WTC11 (cell line): ENCODE measurements at regions of chr12 and their contacts with region 1.

Region 1: DNA sequence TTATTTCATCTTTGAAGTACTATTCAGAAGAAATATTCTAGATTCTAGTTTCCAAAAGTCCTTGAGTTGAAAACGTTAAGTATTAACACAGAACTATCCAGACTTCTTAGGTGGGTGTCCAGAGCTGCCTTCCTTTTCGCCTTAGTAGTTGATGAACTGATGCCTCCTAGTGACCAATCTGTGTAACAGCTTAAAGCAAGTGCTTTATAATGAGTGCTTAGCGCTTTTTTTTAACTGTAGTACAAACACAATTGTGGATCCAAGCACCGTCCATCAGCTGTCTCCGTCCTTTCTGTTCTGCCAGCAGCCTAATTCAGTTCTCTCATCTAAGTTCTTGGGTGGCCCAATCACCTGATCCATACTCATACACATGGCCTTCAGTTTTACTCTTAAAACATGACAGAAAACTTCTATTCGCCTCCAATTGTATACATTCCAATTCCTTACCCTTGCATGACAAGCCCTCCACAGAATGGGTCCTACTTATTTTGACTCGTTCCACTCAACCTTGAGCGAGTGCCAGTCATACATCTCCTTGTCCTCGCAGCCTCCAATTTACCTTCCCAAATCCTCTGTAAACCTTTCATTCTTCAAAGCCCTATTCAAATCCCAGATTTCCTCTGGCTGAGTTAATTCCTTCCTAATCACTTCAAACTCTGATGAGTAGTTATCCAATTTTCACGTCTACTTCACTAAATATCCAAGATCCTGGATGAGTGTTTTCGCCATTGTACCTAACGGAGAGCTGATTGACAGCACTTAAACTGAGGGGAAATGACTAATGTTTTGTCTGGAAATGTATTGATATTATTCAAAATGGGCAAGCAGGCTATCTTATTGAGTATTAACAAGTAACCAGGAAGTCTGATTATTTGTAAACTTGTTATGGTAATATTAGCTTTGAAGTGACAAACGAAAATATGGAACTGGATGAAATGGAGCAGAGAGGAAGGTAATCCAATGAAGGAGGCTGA is 5.8 kb upstream of the PHLDA1 start:
- DNase-seq: no peak
- ATAC-seq: peak; percentile 44
- H3K4me3 Mint-ChIP-seq: no peak overlapping the region
- H3K27ac Mint-ChIP-seq: peak overlapping the region; percentile 82
- H3K4me1 Mint-ChIP-seq: peaks cover 77% of the 10 kb centered on the region
- H3K27me3 Mint-ChIP-seq: no peaks in the 10 kb centered on the region
- CTCF ChIP-seq: peak; percentile 81

Region 2: GRCh38 chr12:75526655-75527511 is 510.5 kb before region 1 on chr12:
- CTCF ChIA-PET with region 1: interaction called, 24 read pairs
- POLR2A ChIA-PET with region 1: interaction called, 4 read pairs
- DNase-seq: peak; percentile 13
- ATAC-seq: peak; percentile 67
- H3K4me3 Mint-ChIP-seq: no peak overlapping the region
- H3K27ac Mint-ChIP-seq: peak overlapping the region; percentile 76
- H3K4me1 Mint-ChIP-seq: peaks cover 14% of the 10 kb centered on the region
- H3K27me3 Mint-ChIP-seq: no peaks in the 10 kb centered on the region; the same call in 1 of the 2 replicates
- CTCF ChIP-seq: peak; percentile 57